ENCODE measurements at regions of chr11 and their contacts with region 1.

Region 1: GRCh38 chr11:64284048-64284961 is at the start of gene BAD:
- DNase-seq: peak; percentile 89 to 94 (median 90)
- H3K4me3 ChIP-seq: peak within 1 kb of the TSS; percentile 93 to 96
- H3K4me3 Mint-ChIP-seq: peak within 1 kb of the TSS; percentile 90 to 93 (median 92)
- H3K27ac ChIP-seq: peak within 1 kb of the TSS; percentile 100
- H3K27ac Mint-ChIP-seq: peak within 1 kb of the TSS; percentile 96 to 99 (median 98)
- H3K4me1 ChIP-seq: peaks cover 24% of the 10 kb centered on the region
- H3K4me1 Mint-ChIP-seq: peaks cover 12 to 48% (median 23%) of the 10 kb centered on the region in 4 donors
- H3K27me3 ChIP-seq: no peaks in the 10 kb centered on the region
- H3K27me3 Mint-ChIP-seq: no peaks in the 10 kb centered on the region
- total RNA-seq, gene BAD: 23.1 to 26.2 TPM

Region 2: GRCh38 chr11:64028398-64029115 is 255.7 kb before region 1 on chr11:
- CTCF ChIA-PET with region 1: no interaction called
- POLR2A ChIA-PET with region 1: no interaction called
- intact Hi-C with region 1: no loop called
- DNase-seq: no peak
- H3K4me3 ChIP-seq: no peak overlapping the region
- H3K4me3 Mint-ChIP-seq: no peak overlapping the region
- H3K27ac ChIP-seq: no peak overlapping the region
- H3K27ac Mint-ChIP-seq: no peak overlapping the region
- H3K4me1 ChIP-seq: no peaks in the 10 kb centered on the region
- H3K4me1 Mint-ChIP-seq: no peaks in the 10 kb centered on the region
- H3K27me3 ChIP-seq: no peaks in the 10 kb centered on the region
- H3K27me3 Mint-ChIP-seq: peaks cover 11 to 28% of the 10 kb centered on the region in 2 donors

Region 3: GRCh38 chr11:64110465-64111375 is 173.6 kb before region 1 on chr11:
- CTCF ChIA-PET with region 1: no interaction called
- POLR2A ChIA-PET with region 1: no interaction called
- intact Hi-C with region 1: no loop called
- DNase-seq: no peak
- H3K4me3 ChIP-seq: no peak overlapping the region
- H3K4me3 Mint-ChIP-seq: no peak overlapping the region
- H3K27ac ChIP-seq: no peak overlapping the region
- H3K27ac Mint-ChIP-seq: no peak overlapping the region
- H3K4me1 ChIP-seq: no peaks in the 10 kb centered on the region
- H3K4me1 Mint-ChIP-seq: no peaks in the 10 kb centered on the region
- H3K27me3 ChIP-seq: no peaks in the 10 kb centered on the region
- H3K27me3 Mint-ChIP-seq: no peaks in the 10 kb centered on the region

Region 4: DNA sequence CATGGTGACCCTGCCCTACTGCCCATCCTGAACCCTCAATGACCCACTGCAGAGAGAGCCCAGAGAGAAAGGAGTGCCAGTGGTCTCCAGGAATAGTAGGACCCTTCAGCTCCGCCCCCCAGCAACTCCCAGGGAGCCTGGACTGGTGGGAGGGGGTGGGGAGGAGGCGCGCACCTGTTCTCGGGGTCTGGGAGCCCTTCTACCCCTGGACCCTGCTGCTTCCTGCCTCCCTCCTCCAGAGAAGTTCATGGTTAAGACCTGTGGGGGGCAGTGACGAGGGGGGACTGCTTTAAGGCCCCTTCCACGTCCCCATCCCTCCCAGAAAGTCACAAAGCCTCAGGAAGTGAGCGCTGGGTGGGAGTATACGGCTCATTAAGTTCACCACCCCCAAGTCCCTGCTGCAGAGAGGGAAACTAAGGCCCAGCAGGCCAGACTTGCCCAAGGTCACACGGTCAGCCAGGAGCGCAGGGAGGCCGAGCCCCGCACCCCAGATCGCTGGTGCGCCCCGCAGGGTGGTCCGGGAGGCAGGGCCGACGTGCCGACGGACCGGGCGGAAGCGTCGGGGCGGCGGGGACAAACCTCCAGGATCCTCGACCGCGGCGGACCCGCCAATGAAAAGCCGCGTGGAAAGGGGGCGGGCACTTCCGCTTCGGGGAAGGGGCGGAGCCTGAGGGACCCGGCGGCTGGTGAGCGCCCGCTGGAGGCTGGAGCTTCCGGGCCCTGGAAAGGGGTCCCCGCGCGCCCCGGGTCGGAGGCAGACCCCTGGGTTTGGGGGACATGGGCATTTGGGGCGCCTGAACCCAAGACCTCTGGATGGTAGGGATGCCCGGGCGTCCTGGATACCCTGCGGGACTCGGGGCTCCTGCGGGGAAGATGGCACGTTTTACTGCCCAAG is 58.4 kb before region 1 on chr11 and contains the starts of genes NUDT22 and TRPT1:
- CTCF ChIA-PET with region 1: interaction called, 3 read pairs
- POLR2A ChIA-PET with region 1: interaction called, 22 read pairs
- intact Hi-C with region 1: no loop called
- DNase-seq: peak; percentile 82 to 88 (median 85)
- H3K4me3 ChIP-seq: peak within 1 kb of the TSS; percentile 86 to 94
- H3K4me3 Mint-ChIP-seq: peak within 1 kb of the TSS; percentile 89 to 94 (median 92)
- H3K27ac ChIP-seq: peak within 1 kb of the TSS; percentile 77
- H3K27ac Mint-ChIP-seq: peak within 1 kb of the TSS; percentile 88 to 97 (median 93)
- H3K4me1 ChIP-seq: peaks cover 43% of the 10 kb centered on the region
- H3K4me1 Mint-ChIP-seq: peaks cover 13 to 50% (median 28%) of the 10 kb centered on the region in 4 donors
- H3K27me3 ChIP-seq: no peaks in the 10 kb centered on the region
- H3K27me3 Mint-ChIP-seq: no peaks in the 10 kb centered on the region
- total RNA-seq, gene NUDT22: 83.9 to 101 TPM
- total RNA-seq, gene TRPT1: 37.6 to 42.1 TPM

Region 5: DNA sequence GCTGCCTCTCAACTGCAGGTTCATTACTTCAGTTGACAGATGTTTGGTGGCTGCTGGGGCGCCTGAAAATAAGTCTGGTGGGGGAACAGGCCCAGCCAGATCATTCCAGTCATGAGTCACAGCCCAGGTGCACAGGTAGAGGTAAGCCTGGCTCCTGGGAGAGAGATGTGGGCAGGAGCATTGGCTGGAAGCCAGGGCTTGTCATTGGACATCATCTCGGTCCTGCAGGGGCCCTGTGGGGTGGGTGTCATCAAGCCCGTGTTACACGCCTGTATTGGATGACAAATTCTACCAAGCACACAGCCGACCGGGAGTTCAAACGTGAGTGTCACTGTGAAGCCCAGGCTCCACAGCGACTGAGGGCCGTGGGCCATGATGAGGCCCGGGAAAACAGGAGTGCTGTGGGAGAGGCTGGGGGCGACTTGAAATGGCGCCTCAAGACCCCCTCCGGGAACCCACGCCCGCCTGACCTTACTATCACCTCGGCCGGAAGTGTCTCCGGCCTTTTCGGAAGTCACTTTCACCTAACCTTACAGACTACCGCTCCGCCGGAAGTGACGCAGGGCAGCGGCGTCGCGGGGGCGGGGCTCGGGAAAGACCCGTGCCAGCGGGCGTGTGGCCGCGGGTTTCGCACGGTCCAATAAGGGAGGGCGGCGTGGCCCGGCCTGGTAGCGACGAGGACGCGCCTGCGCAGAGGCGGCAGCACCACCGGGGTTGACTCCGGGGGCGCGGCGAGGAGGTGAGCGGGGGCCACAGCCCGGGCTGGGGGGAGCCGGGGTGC is 43.7 kb before region 1 on chr11 and contains the start of gene FKBP2:
- CTCF ChIA-PET with region 1: no interaction called
- POLR2A ChIA-PET with region 1: interaction called, 54 read pairs
- intact Hi-C with region 1: loop called (anchors 1 kb)
- DNase-seq: peak; percentile 97 to 99 (median 99)
- H3K4me3 ChIP-seq: peak within 1 kb of the TSS; percentile 67 to 73
- H3K4me3 Mint-ChIP-seq: peak within 1 kb of the TSS; percentile 87 to 97 (median 88)
- H3K27ac ChIP-seq: peak within 1 kb of the TSS; percentile 99
- H3K27ac Mint-ChIP-seq: peak within 1 kb of the TSS; percentile 99 to 100 (median 100)
- H3K4me1 ChIP-seq: peaks cover 38% of the 10 kb centered on the region
- H3K4me1 Mint-ChIP-seq: peaks cover 14 to 52% (median 29%) of the 10 kb centered on the region in 4 donors
- H3K27me3 ChIP-seq: no peaks in the 10 kb centered on the region
- H3K27me3 Mint-ChIP-seq: no peaks in the 10 kb centered on the region
- total RNA-seq, gene FKBP2: 41.4 to 46.4 TPM

Measured in CD4-positive, alpha-beta memory T cell (primary cell).